Activated CD4-positive, alpha-beta memory T cell treated with anti-CD3 and anti-CD28 coated beads, Interleukin-2, amount 10 ng/mL, durations not matched to agents 7 days and 5 days (primary cell): ENCODE measurements at regions of chr19 and their contacts with region 1.

Region 1: GRCh38 chr19:13060964-13061927 is 41.4 kb downstream of the LYL1 start:
- DNase-seq: peak; percentile 77
- H3K4me3 Mint-ChIP-seq: peak overlapping the region; percentile 57
- H3K27ac Mint-ChIP-seq: no peak overlapping the region
- H3K4me1 Mint-ChIP-seq: peaks cover 7% of the 10 kb centered on the region
- H3K27me3 Mint-ChIP-seq: peaks cover 30% of the 10 kb centered on the region

Region 2: DNA sequence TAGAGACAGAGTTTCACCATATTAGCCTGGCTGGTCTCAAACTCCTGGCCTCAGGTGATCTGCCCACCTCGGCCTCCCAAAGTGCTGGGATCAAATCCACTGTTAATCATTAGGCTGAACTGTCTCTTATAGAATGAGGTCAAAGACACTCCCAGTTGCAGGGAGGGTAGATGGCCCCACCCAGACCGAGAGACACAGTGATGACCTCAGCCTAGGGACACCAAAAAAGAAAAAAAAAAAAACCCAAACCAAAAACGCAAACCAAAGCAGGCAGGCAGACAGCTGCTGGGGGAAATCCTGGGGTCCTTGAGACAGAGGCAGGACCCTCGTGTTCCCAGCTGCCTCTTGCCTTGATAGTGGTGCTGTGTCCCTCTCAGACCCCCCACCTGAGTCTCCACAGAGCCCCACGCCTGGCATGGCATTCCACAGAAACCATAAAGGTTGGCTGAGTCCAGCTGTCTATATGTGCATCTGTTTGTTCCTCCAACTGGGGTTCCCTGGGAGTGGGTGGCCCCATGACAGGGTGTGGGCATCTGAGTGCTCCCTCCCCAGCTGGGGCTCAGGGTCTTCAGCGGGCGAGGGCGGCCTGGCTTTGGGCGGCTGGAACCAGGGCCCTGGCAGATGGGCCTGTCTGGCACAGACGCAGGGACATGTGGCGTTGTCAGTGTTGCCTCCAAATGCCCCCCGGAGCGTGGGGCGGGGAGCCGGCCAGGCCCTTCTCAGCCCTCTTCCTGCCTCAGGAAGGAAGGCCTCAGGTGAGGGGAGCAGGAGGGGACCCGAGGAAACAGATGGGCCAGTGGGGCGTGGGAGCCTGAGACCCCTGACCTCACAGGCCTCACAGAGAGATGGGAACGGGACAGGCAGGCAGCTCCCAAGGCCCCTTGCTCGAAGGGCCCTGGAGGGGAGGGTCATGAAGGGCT is 86.7 kb before region 1 on chr19:
- CTCF ChIA-PET with region 1: interaction called, 56 read pairs
- POLR2A ChIA-PET with region 1: interaction called, 8 read pairs
- DNase-seq: no peak
- H3K4me3 Mint-ChIP-seq: no peak overlapping the region
- H3K27ac Mint-ChIP-seq: no peak overlapping the region
- H3K4me1 Mint-ChIP-seq: no peaks in the 10 kb centered on the region
- H3K27me3 Mint-ChIP-seq: peaks cover 5% of the 10 kb centered on the region

Region 3: DNA sequence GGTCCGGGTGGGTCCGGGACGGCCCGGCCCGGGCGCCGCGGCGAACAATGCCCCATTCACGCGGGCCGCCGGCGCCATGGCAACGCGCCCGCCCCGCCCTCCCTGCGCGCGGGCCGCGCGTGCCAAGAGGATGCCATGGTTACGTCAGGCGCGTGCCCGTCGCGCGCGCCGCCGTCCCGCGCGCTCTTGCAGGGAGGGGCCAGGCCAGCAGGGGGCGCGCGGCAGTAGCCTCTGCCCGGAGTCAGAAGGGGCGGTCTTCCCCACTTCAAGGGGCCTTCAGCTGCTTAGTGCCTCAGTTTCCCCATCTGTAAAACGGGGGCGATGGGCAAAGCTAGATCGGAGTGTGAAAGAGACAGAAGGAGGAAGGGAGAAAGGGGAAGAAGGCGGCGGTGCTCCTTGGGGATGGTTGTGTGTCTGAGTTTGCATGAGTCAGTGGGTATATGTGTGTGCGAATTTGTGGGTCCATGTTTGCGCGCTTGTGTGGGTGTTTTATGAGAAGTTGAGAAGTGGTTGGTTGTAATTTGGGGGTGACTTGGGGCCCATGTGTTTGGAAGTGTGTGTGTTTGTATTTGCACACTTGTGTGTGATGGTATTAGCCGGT is 77.6 kb before region 1 on chr19:
- CTCF ChIA-PET with region 1: interaction called, 56 read pairs
- POLR2A ChIA-PET with region 1: no interaction called
- DNase-seq: peak; percentile 84
- H3K4me3 Mint-ChIP-seq: no peak overlapping the region
- H3K27ac Mint-ChIP-seq: no peak overlapping the region
- H3K4me1 Mint-ChIP-seq: peaks cover 1% of the 10 kb centered on the region
- H3K27me3 Mint-ChIP-seq: peaks cover 13% of the 10 kb centered on the region

Region 4: DNA sequence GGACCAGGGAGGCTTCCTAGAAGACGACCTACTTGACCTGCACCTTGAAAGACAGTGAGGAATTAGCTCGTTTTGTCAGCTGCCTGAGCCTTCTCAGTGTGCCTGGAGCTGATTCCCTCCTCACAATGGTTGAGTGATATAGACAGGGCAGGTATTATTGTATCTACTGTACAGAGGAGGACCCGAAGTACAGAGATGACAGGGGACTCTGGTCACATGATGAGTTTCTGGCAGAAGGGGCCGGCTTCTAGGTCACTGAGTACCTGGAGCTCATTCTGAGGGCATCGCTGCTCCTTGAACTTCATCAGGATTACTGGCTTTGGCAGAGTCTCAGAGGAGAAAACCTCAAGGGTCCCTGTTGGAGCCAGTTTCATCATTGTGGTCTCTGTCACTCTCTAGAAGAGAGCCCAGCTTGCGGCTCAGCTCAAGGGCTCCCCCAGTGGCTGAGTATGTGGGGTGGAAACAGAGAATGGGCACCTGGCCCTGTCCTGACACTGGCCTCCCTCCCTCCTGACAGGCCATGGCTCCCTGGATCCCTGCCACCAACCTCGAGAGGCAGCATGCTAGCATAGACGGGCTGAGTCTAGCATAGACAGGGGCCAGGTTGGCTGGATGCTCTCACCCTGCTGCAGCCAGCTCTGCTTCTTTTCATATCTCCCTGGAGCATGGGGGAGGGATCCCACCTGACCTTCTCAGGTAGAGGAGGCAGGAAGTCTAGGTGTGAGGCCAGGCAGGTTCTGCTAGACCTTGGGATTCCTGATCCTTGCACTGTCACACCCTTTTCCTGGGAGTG is 27.2 kb before region 1 on chr19:
- CTCF ChIA-PET with region 1: interaction called, 25 read pairs
- POLR2A ChIA-PET with region 1: no interaction called
- DNase-seq: peak; percentile 42
- H3K4me3 Mint-ChIP-seq: no peak overlapping the region
- H3K27ac Mint-ChIP-seq: no peak overlapping the region
- H3K4me1 Mint-ChIP-seq: peaks cover 2% of the 10 kb centered on the region
- H3K27me3 Mint-ChIP-seq: peaks cover 4% of the 10 kb centered on the region

Region 5: GRCh38 chr19:13042443-13043130 is 18.7 kb before region 1 on chr19:
- CTCF ChIA-PET with region 1: interaction called, 14 read pairs
- POLR2A ChIA-PET with region 1: no interaction called
- DNase-seq: no peak
- H3K4me3 Mint-ChIP-seq: no peak overlapping the region
- H3K27ac Mint-ChIP-seq: no peak overlapping the region
- H3K4me1 Mint-ChIP-seq: peaks cover 2% of the 10 kb centered on the region
- H3K27me3 Mint-ChIP-seq: peaks cover 2% of the 10 kb centered on the region

Region 6: DNA sequence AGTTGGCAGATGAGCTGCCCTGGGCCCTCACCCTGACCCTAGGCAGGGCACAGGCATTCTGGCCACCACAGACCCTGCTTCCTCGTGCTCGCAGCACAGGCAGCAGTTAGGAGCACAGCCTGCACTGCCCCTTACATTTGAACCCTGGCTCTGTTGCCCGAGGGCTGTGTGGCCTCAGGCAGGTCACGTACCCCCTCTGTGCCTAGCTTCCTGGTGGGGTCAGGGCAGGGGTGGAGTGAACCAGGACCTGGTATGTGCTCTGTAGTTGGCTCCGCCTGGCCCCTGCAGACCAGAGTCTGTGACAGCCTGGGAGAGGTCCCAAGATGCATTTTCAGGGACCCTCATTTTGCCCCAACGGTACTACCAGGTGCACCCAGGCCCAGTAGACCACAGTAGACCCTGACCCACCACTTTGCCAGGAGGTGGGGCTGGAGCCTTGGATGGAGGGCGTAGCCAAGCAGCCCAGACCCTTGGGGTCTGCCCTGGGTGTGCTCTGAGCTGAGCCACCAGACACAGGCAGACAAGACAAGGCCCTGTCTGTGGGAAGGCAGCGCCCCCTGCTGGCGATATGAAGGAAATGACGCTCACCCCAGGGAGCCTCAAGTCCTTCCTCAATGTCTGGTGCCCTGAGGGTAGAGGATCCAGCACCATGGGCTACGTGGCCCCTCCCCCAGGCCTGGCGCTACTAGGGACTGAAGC is 32.3 kb after region 1 on chr19:
- CTCF ChIA-PET with region 1: interaction called, 23 read pairs
- POLR2A ChIA-PET with region 1: interaction called, 4 read pairs
- DNase-seq: peak; percentile 85
- H3K4me3 Mint-ChIP-seq: no peak overlapping the region
- H3K27ac Mint-ChIP-seq: no peak overlapping the region
- H3K4me1 Mint-ChIP-seq: peaks cover 30% of the 10 kb centered on the region
- H3K27me3 Mint-ChIP-seq: peaks cover 31% of the 10 kb centered on the region

Region 7: DNA sequence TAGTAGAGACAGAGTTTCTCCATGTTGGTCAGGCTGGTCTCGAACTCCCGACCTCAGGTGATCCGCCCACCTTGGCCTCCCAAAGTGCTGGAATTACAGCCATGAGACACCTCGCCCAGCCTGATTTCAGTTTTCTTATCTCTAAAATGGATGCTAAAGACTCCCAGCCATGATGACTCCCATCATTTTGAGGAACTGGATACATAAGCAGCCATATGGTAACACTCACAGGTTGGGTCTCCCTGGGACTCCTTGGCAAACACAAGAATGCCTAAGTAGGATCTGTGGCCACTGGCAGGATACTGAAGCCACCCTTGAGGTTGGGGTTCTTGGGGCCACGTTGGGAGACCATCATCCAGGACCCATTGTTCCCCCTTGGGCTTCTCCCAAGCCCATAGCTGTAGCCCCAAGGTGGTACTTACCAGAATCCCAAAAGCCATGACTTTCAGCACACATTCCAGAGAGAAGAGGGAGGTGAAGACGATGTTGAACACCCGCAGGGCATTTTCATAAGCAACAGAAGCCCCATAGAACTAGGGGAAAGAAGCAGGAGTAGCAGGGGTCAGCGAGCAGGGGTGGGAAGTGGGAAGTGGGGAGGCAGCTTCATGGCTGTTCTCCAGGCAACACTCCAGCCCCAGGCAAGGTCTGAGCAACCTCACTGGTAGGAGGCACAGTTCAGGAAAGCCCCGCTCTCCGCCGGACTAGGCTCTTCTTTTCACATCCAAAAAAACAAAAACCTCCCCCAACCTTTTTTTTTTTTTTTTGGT is 191.5 kb after region 1 on chr19:
- CTCF ChIA-PET with region 1: no interaction called
- POLR2A ChIA-PET with region 1: no interaction called
- DNase-seq: no peak
- H3K4me3 Mint-ChIP-seq: no peak overlapping the region
- H3K27ac Mint-ChIP-seq: no peak overlapping the region
- H3K4me1 Mint-ChIP-seq: no peaks in the 10 kb centered on the region
- H3K27me3 Mint-ChIP-seq: peaks cover 12% of the 10 kb centered on the region